ENCODE measurements at regions of chr1 and their contacts with region 1.

Region 1: GRCh38 chr1:166544561-166544960 is 294.7 kb upstream of the POGK start:
- DNase-seq: no peak
- ATAC-seq: no peak
- H3K4me3 ChIP-seq: no peak overlapping the region
- H3K4me3 Mint-ChIP-seq: no peak overlapping the region
- H3K27ac ChIP-seq: no peak overlapping the region
- H3K27ac Mint-ChIP-seq: no peak overlapping the region
- H3K4me1 ChIP-seq: no peaks in the 10 kb centered on the region
- H3K4me1 Mint-ChIP-seq: no peaks in the 10 kb centered on the region
- H3K27me3 ChIP-seq: peaks cover 0 to 5% of the 10 kb centered on the region in 2 experiments
- H3K27me3 Mint-ChIP-seq: peaks cover 5% of the 10 kb centered on the region
- CTCF ChIP-seq: no peak

Region 2: DNA sequence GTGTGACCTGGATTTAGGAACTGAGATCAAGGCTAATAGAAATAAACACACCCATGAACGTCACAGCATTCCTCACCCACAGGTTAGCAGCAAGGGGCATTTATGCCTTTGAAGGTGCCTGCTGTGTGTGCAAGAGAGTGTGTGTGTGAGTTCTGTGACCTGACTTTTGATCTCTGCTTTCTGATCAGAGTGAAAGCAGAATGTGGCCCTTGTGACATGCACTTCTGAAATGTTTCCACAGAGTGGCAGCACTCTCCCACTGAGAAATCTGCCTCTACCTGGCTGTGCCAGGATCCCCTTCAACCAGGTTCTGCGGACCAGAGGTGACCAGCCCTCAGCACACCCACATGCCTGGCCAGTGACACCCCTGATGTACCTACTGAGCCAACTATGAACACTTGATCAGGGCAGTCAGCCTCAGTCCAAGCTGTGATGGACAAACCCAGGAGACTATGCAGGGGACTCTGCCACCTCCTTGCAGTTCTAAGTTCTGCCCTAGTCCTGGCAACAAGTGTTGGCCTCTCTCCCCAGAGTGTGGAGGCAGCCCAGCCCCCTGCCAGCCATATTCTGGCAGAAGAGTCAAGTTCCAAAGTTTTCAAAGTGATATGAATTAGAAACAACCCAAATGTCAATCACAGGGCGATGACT is 1140.6 kb before region 1 on chr1:
- CTCF ChIA-PET with region 1: no interaction called
- POLR2A ChIA-PET with region 1: no interaction called
- intact Hi-C with region 1: no loop called
- DNase-seq: peak in 7 of 14 experiments; percentile 7 to 55 (median 33)
- ATAC-seq: peak; percentile 62
- H3K4me3 ChIP-seq: no peak overlapping the region
- H3K4me3 Mint-ChIP-seq: no peak overlapping the region
- H3K27ac ChIP-seq: no peak overlapping the region
- H3K27ac Mint-ChIP-seq: no peak overlapping the region
- H3K4me1 ChIP-seq: no peaks in the 10 kb centered on the region
- H3K4me1 Mint-ChIP-seq: no peaks in the 10 kb centered on the region
- H3K27me3 ChIP-seq: peaks cover 10 to 25% of the 10 kb centered on the region in 2 experiments
- H3K27me3 Mint-ChIP-seq: peaks cover 61% of the 10 kb centered on the region
- CTCF ChIP-seq: no peak

Region 3: GRCh38 chr1:166603247-166603646 is 58.7 kb after region 1 on chr1:
- CTCF ChIA-PET with region 1: no interaction called
- POLR2A ChIA-PET with region 1: no interaction called
- intact Hi-C with region 1: loop called in 1 of 2 experiments (anchors 10 kb)
- DNase-seq: no peak
- ATAC-seq: no peak
- H3K4me3 ChIP-seq: no peak overlapping the region
- H3K4me3 Mint-ChIP-seq: no peak overlapping the region
- H3K27ac ChIP-seq: no peak overlapping the region
- H3K27ac Mint-ChIP-seq: no peak overlapping the region
- H3K4me1 ChIP-seq: no peaks in the 10 kb centered on the region
- H3K4me1 Mint-ChIP-seq: no peaks in the 10 kb centered on the region
- H3K27me3 ChIP-seq: peaks cover 0 to 3% of the 10 kb centered on the region in 2 experiments
- H3K27me3 Mint-ChIP-seq: peaks cover 4% of the 10 kb centered on the region
- CTCF ChIP-seq: no peak

Measured in CD4-positive, alpha-beta T cell (primary cell).